ENCODE measurements at regions of chr1 and their contacts with region 1.

Region 1: GRCh38 chr1:62687903-62688686 is at the start of gene DOCK7:
- DNase-seq: peak; percentile 47 to 87 (median 70)
- H3K4me3 ChIP-seq: peak within 1 kb of the TSS; percentile 58 to 94 (median 81)
- H3K27ac ChIP-seq: peak within 1 kb of the TSS in 57 of 59 donors; percentile 49 to 94 (median 84)
- H3K27me3 ChIP-seq: no peaks in the 10 kb centered on the region
- CTCF ChIP-seq: peak in 1 of 56 donors; percentile 7
- total RNA-seq, gene DOCK7: 39.8 to 134 (median 64.9) TPM

Region 2: DNA sequence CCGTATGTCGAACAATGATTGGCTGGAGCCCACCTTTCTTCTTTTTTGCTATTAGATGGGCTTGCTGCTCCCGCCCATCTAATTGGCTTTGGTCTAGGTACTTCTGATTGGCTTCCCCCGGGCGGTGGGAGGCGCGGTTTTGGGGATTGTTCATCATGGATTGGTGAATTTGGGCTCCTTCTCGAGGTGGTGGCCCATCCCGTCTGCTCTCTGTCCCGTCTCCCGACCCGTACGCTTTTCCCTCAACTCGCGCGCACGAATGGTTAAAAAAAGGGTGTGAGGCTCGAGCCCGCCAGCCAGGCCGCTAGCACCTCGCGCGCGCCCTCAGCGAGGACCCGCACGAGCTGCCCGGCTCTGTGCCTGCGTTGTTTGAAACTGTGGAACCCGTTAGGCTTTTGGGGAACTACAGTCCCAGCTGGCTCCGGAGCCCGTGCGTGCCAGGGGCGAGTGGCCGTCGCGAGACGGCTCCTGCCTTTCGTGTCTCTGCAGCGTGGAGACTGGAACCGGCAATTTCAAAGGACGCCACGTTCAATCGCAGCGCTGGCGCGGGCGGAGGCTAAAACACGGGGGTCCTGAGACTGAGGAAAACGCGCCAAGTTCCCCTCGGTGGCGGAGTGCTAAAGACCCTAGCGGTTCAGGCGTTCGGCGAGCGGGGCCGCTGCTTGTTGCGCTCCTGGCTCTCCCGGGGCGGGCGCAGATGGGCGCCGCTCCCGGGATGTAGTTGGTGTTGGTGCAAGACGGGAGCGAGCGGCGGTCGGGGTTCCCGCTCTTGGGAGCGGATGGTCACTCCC is 251.4 kb before region 1 on chr1 and contains the start of gene USP1:
- intact Hi-C with region 1: loop called (anchors 5 to 10 kb)
- DNase-seq: peak; percentile 78 to 98 (median 96)
- H3K4me3 ChIP-seq: peak within 1 kb of the TSS; percentile 67 to 99 (median 92)
- H3K27ac ChIP-seq: peak within 1 kb of the TSS; percentile 72 to 100 (median 98)
- H3K27me3 ChIP-seq: no peaks in the 10 kb centered on the region
- CTCF ChIP-seq: peak in 6 of 56 donors; percentile 2 to 26 (median 8)
- total RNA-seq, gene USP1: 14.0 to 24.9 (median 20.8) TPM

Region 3: GRCh38 chr1:63073309-63074306 is 385.5 kb after region 1 on chr1:
- intact Hi-C with region 1: no loop called
- DNase-seq: peak in 8 of 10 donors; percentile 3 to 58 (median 34)
- H3K4me3 ChIP-seq: peak overlapping the region; percentile 29 to 71 (median 52)
- H3K27ac ChIP-seq: peak overlapping the region in 3 of 59 donors; percentile 7 to 33 (median 33)
- H3K27me3 ChIP-seq: peaks cover 0 to 27% (median 7%) of the 10 kb centered on the region in 45 donors
- CTCF ChIP-seq: peak in 52 of 56 donors; percentile 15 to 68 (median 47)

Measured in dorsolateral prefrontal cortex (tissue), 120 donors.